H1 (cell line): ENCODE measurements at regions of chr9 and their contacts with region 1.

Region 1: DNA sequence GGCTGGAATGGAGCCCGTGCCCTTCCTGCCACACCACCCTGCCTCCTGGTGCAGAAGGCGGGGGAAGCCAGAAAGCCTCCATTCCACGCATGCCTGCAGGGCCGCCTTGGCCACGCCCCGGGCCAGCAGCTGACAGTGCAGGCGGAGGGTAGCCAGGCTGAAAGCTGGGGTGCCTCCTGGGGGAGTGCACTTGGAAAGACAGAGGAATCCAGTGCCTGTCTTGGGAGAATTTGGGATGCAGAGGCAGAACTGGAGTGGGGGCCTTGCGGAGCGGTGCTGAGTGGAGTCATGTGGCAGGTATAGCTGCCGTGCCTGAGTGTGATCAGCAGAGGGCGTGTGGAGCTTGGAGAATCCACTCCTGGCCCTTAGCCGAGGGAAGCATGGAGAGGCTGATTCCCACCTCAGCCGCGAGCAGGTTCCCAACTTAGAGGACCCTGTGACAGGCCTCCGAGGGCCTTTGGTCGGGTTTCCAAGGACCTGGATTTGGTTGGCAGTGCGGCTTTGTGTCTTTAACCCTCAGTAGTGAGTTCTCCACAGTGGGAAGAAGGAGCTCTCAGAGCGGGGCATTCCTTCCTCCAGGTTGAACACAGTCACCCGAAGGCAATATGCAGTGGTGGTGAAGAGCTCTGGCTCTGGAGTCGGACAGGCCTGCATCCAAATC is 9.1 kb upstream of the URM1 start:
- DNase-seq: peak in 1 of 2 experiments; percentile 87
- H3K4me3 ChIP-seq: peak overlapping the region in 1 of 4 experiments; percentile 31; a peak in 3 of 8 replicates
- H3K27ac ChIP-seq: no peak overlapping the region
- H3K4me1 ChIP-seq: peaks cover 5 to 20% (median 10%) of the 10 kb centered on the region in 4 experiments
- H3K27me3 ChIP-seq: peaks cover 23 to 55% (median 42%) of the 10 kb centered on the region in 4 experiments
- CTCF ChIP-seq: peak; percentile 90 to 98 (median 98)
- EP300 ChIP-seq: no peak
- POLR2A ChIP-seq: no peak
- RAD21 ChIP-seq: peak; percentile 96 to 98

Region 2: GRCh38 chr9:128296337-128297220 is 65.5 kb before region 1 on chr9:
- CTCF ChIA-PET with region 1: interaction called, 29 read pairs
- POLR2A ChIA-PET with region 1: interaction called, 4 read pairs
- DNase-seq: no peak
- H3K4me3 ChIP-seq: no peak overlapping the region
- H3K27ac ChIP-seq: no peak overlapping the region
- H3K4me1 ChIP-seq: no peaks in the 10 kb centered on the region
- H3K27me3 ChIP-seq: no peaks in the 10 kb centered on the region
- CTCF ChIP-seq: no peak
- EP300 ChIP-seq: no peak
- POLR2A ChIP-seq: no peak
- RAD21 ChIP-seq: no peak

Region 3: DNA sequence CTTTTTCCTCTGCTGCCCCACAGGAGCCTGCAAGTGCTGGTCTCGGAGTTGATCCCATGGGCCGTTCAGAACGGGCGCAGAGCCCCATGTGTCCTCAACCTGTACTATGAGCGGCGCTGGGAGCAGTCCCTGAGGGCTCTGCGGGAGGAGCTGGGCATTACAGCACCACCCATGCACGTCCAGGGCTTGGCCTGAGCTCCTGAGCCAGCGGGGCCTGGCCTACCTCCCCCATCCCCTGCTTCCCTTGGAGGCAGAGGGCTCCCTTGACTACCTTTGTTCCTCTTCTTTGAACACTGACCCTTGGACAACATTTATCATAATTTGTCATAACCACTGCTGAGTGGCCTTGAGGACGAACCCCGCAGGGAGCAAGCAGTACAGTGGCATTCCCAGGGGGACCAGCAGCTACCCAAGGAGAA is 28.7 kb before region 1 on chr9:
- CTCF ChIA-PET with region 1: interaction called, 11 read pairs
- POLR2A ChIA-PET with region 1: interaction called, 4 read pairs
- DNase-seq: no peak
- H3K4me3 ChIP-seq: no peak overlapping the region
- H3K27ac ChIP-seq: no peak overlapping the region
- H3K4me1 ChIP-seq: no peaks in the 10 kb centered on the region
- H3K27me3 ChIP-seq: no peaks in the 10 kb centered on the region; a peak in 1 of 7 replicates
- CTCF ChIP-seq: no peak
- EP300 ChIP-seq: no peak
- POLR2A ChIP-seq: no peak
- RAD21 ChIP-seq: no peak

Region 4: GRCh38 chr9:128383007-128383753 is 21.1 kb after region 1 on chr9:
- CTCF ChIA-PET with region 1: interaction called, 323 read pairs
- POLR2A ChIA-PET with region 1: interaction called, 92 read pairs
- DNase-seq: peak; percentile 68 to 82
- H3K4me3 ChIP-seq: peak overlapping the region in 3 of 4 experiments; percentile 11 to 44 (median 24); a peak in 5 of 8 replicates
- H3K27ac ChIP-seq: no peak overlapping the region
- H3K4me1 ChIP-seq: peaks cover 26 to 40% (median 36%) of the 10 kb centered on the region in 4 experiments
- H3K27me3 ChIP-seq: peaks cover 9 to 68% (median 60%) of the 10 kb centered on the region in 4 experiments
- CTCF ChIP-seq: no peak
- EP300 ChIP-seq: no peak
- POLR2A ChIP-seq: no peak
- RAD21 ChIP-seq: no peak

Region 5: GRCh38 chr9:128412120-128412790 is 50.1 kb after region 1 on chr9:
- CTCF ChIA-PET with region 1: interaction called, 544 read pairs
- POLR2A ChIA-PET with region 1: interaction called, 24 read pairs
- DNase-seq: peak; percentile 87 to 100
- H3K4me3 ChIP-seq: peak overlapping the region in 1 of 4 experiments; percentile 31; a peak in 1 of 8 replicates
- H3K27ac ChIP-seq: no peak overlapping the region
- H3K4me1 ChIP-seq: peaks cover 13 to 37% (median 20%) of the 10 kb centered on the region in 4 experiments
- H3K27me3 ChIP-seq: peaks cover 38 to 67% (median 57%) of the 10 kb centered on the region in 4 experiments
- CTCF ChIP-seq: peak; percentile 96 to 99 (median 98)
- EP300 ChIP-seq: no peak
- POLR2A ChIP-seq: no peak
- RAD21 ChIP-seq: peak; percentile 100

Region 6: GRCh38 chr9:128438343-128439109 is 76.4 kb after region 1 on chr9:
- CTCF ChIA-PET with region 1: interaction called, 12 read pairs
- POLR2A ChIA-PET with region 1: interaction called, 5 read pairs
- DNase-seq: peak; percentile 79 to 99
- H3K4me3 ChIP-seq: no peak overlapping the region
- H3K27ac ChIP-seq: no peak overlapping the region
- H3K4me1 ChIP-seq: peaks cover 0 to 3% (median 0%) of the 10 kb centered on the region in 4 experiments; a peak in 1 of 7 replicates
- H3K27me3 ChIP-seq: no peaks in the 10 kb centered on the region; a peak in 1 of 7 replicates
- CTCF ChIP-seq: peak; percentile 90 to 99 (median 95)
- EP300 ChIP-seq: no peak
- POLR2A ChIP-seq: no peak
- RAD21 ChIP-seq: peak; percentile 79 to 91